Activated CD4-positive, alpha-beta memory T cell treated with anti-CD3 and anti-CD28 coated beads for 36 hours (primary cell): ENCODE measurements at regions of chr2 and their contacts with region 1.

Region 1: GRCh38 chr2:102138331-102138730 is 4.2 kb upstream of the IL1R1 start:
- DNase-seq: no peak
- H3K4me3 Mint-ChIP-seq: no peak overlapping the region
- H3K27ac Mint-ChIP-seq: peak overlapping the region; percentile 70
- H3K4me1 Mint-ChIP-seq: peaks cover 59% of the 10 kb centered on the region
- H3K27me3 Mint-ChIP-seq: peaks cover 24% of the 10 kb centered on the region

Region 2: DNA sequence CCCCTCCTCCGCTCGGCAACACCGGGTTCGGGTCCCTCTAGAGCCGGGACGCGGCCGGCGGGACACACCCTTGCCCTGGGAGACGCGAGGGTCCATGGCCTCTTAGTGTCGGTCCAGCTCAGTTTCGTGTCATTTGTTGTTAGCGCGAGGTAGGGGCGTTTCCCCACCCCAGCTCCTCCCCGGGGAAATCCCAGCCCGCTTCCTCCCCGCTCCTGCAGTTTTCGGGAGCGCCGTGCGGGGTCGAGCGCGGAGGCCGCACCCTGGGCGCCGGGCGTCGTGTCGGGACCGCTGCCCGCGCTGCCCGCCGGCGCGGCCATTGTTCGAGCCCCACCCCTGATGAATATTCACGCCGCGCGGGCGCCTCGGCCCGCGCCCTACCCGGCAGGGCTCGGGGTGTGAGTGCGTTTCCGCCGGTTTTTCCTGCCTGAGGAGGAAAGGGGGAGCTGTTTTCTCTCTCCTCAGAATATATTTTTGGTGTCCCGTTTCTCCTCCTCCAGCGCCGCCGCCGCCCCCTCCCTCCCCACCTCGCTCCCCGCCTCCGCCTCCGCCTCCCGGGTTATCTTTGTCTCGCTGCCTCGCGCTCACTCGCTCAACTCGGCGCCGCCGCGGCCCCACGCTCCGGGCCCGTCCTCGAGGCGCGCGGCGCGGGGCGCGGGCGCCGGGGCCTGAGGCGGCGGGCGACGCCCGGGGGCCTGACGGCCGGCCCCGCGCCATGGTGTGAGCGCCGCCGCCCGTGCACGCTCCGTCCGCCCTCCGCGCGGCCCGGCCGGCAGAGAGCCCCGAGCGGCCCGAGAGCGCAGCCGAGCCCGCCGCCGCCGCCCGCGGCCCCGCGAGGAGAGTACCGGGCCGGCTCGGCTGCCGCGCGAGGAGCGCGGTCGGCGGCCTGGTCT is 441.0 kb before region 1 on chr2 and contains the start of gene MAP4K4:
- CTCF ChIA-PET with region 1: no interaction called
- POLR2A ChIA-PET with region 1: no interaction called
- intact Hi-C with region 1: no loop called
- DNase-seq: peak; percentile 80
- H3K4me3 Mint-ChIP-seq: peak within 1 kb of the TSS; percentile 79
- H3K27ac Mint-ChIP-seq: peak within 1 kb of the TSS; percentile 78
- H3K4me1 Mint-ChIP-seq: peaks cover 26% of the 10 kb centered on the region
- H3K27me3 Mint-ChIP-seq: no peaks in the 10 kb centered on the region
- total RNA-seq, gene MAP4K4: 42.1 to 43.4 TPM

Region 3: GRCh38 chr2:102126651-102127050 is 11.7 kb before region 1 on chr2:
- CTCF ChIA-PET with region 1: interaction called, 7 read pairs
- POLR2A ChIA-PET with region 1: interaction called, 32 read pairs
- intact Hi-C with region 1: loop called (anchors 1 kb)
- DNase-seq: no peak
- H3K4me3 Mint-ChIP-seq: no peak overlapping the region
- H3K27ac Mint-ChIP-seq: peak overlapping the region; percentile 90
- H3K4me1 Mint-ChIP-seq: peaks cover 38% of the 10 kb centered on the region
- H3K27me3 Mint-ChIP-seq: peaks cover 12% of the 10 kb centered on the region